T-cell (primary cell): ENCODE measurements at regions of chr18 and their contacts with region 1.

Region 1: GRCh38 chr18:58297198-58297597 is 253.2 kb downstream of the NEDD4L start:
- DNase-seq: peak in 1 of 35 experiments; percentile 32
- ATAC-seq: peak in 1 of 4 experiments; percentile 19
- H3K4me3 ChIP-seq: no peak overlapping the region
- H3K4me3 Mint-ChIP-seq: no peak overlapping the region
- H3K27ac ChIP-seq: no peak overlapping the region
- H3K27ac Mint-ChIP-seq: peak overlapping the region in 1 of 2 donors; percentile 12
- H3K4me1 ChIP-seq: no peaks in the 10 kb centered on the region
- H3K4me1 Mint-ChIP-seq: peaks cover 0 to 21% (median 3%) of the 10 kb centered on the region in 3 donors
- H3K27me3 ChIP-seq: peaks cover 0 to 2% of the 10 kb centered on the region in 2 experiments
- H3K27me3 Mint-ChIP-seq: peaks cover 4% of the 10 kb centered on the region in 2 donors

Region 2: GRCh38 chr18:59079264-59079972 is 782.2 kb after region 1 on chr18:
- CTCF ChIA-PET with region 1: no interaction called
- POLR2A ChIA-PET with region 1: interaction called in 1 of 2 experiments, 11 read pairs
- DNase-seq: no peak
- ATAC-seq: no peak
- H3K4me3 ChIP-seq: no peak overlapping the region
- H3K4me3 Mint-ChIP-seq: no peak overlapping the region
- H3K27ac ChIP-seq: no peak overlapping the region
- H3K27ac Mint-ChIP-seq: no peak overlapping the region
- H3K4me1 ChIP-seq: peaks cover 0 to 3% of the 10 kb centered on the region in 2 experiments
- H3K4me1 Mint-ChIP-seq: peaks cover 4 to 8% (median 6%) of the 10 kb centered on the region in 3 donors
- H3K27me3 ChIP-seq: peaks cover 6 to 23% of the 10 kb centered on the region in 2 experiments
- H3K27me3 Mint-ChIP-seq: peaks cover 23 to 45% of the 10 kb centered on the region in 2 donors